ENCODE measurements at regions of chr1 and their contacts with region 1.

Region 1: GRCh38 chr1:181479137-181479745 is 4.1 kb upstream of the CACNA1E start:
- DNase-seq: peak; percentile 59
- H3K4me3 Mint-ChIP-seq: no peak overlapping the region
- H3K27ac Mint-ChIP-seq: no peak overlapping the region
- H3K4me1 Mint-ChIP-seq: no peaks in the 10 kb centered on the region
- H3K27me3 Mint-ChIP-seq: peaks cover 39% of the 10 kb centered on the region
- CTCF ChIP-seq: peak; percentile 66

Region 2: GRCh38 chr1:181676269-181676668 is 197.0 kb after region 1 on chr1:
- CTCF ChIA-PET with region 1: interaction called, 8 read pairs
- intact Hi-C with region 1: loop called (anchors 1 kb)
- DNase-seq: peak; percentile 42
- H3K4me3 Mint-ChIP-seq: no peak overlapping the region
- H3K27ac Mint-ChIP-seq: no peak overlapping the region
- H3K4me1 Mint-ChIP-seq: no peaks in the 10 kb centered on the region
- H3K27me3 Mint-ChIP-seq: peaks cover 41% of the 10 kb centered on the region
- CTCF ChIP-seq: peak; percentile 12

Region 3: GRCh38 chr1:182054698-182055326 is 575.6 kb after region 1 on chr1:
- CTCF ChIA-PET with region 1: interaction called, 11 read pairs
- intact Hi-C with region 1: loop called (anchors 1 kb)
- DNase-seq: peak; percentile 75
- H3K4me3 Mint-ChIP-seq: no peak overlapping the region
- H3K27ac Mint-ChIP-seq: no peak overlapping the region
- H3K4me1 Mint-ChIP-seq: no peaks in the 10 kb centered on the region
- H3K27me3 Mint-ChIP-seq: peaks cover 2% of the 10 kb centered on the region
- CTCF ChIP-seq: peak; percentile 62

Measured in Calu3 (cell line).